ENCODE measurements at regions of chr13 and their contacts with region 1.

Region 1: DNA sequence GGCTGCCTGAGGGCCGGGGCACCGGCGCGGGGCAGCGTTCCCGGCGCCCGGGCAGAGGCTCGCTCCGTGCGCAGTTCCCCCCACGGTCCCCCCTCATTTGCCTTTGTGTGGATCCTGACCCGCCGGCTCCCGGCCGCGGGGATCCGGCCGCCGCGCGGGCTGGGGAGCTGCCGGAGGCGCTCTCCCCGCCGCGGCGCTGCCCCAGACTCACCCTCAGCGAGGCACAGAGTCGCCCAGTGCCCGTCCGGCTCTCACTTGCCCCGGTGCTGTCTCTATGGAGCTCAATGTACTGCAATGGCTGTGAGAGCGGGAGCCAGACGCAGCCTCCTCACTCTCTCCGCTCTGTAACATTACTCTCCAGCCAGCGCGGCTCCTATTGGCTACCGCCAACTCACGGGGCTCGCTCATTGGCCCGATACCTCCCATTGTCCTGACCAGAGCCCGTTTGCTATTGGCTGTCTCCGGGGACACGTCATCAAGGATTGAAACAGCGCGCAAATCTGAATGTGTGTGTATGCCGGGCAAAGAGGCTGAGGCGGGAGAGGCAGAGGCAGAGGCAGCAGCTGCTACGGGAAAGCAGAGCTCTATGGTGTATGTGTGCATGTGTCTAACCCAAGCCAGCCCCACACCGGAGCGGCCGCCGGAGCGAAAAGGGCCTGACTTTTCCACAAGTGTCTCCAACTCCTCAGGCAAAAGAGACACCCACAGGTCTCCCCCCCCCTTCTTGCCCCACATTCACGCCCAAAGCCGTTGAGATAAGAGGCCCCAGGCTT is at the start of gene HMGB1:
- DNase-seq: peak; percentile 93 to 98 (median 96)
- ATAC-seq: peak; percentile 85
- H3K4me3 ChIP-seq: peak within 1 kb of the TSS; percentile 54 to 97
- H3K4me3 Mint-ChIP-seq: peak within 1 kb of the TSS; percentile 95
- H3K27ac ChIP-seq: peak within 1 kb of the TSS; percentile 60 to 97
- H3K27ac Mint-ChIP-seq: peak within 1 kb of the TSS; percentile 99
- H3K4me1 ChIP-seq: peaks cover 26% of the 10 kb centered on the region
- H3K4me1 Mint-ChIP-seq: peaks cover 27% of the 10 kb centered on the region
- H3K27me3 ChIP-seq: no peaks in the 10 kb centered on the region
- H3K27me3 Mint-ChIP-seq: no peaks in the 10 kb centered on the region
- CTCF ChIP-seq: no peak
- total RNA-seq, gene HMGB1: 445 to 453 TPM

Region 2: DNA sequence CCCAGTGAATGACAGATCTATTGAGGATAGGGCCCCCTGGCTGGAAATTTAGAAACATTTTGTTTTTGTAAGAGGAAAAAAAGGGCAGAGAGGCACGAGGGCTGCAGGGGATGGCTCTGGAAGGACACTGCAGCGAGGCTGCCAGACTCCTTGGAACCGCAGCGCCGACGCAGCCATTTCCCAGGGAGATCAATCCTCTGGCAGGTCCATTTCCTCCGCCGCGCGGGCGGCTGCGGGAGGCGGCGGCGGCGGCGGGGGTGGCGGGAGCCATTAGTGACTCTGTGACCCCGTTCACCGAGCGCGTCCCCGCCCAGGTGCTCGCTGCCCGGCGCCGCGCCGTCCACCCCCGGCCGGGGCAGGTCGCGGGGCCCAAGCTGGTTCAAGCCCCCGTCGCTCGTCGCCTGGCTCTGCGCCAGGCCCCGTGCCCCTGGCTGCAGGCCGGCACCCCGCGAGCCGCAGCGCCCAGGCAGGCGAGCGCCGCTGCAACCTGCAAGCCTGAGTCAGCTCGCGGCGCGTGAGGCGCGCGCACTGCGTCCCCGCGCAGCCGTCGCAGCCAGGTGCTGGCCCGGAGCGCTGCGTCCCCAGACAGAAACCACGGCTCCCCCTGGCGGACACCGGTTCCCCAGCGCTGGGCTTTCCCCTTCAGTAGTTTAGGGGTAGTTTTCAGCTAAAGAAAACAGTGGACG is 351.1 kb before region 1 on chr13:
- CTCF ChIA-PET with region 1: interaction called, 3 read pairs
- POLR2A ChIA-PET with region 1: interaction called, 6 read pairs
- intact Hi-C with region 1: loop called in 1 of 2 experiments (anchors 5 kb)
- DNase-seq: peak; percentile 90 to 97 (median 94)
- ATAC-seq: peak; percentile 92
- H3K4me3 ChIP-seq: peak overlapping the region; percentile 45 to 61
- H3K4me3 Mint-ChIP-seq: peak overlapping the region; percentile 85
- H3K27ac ChIP-seq: no peak overlapping the region
- H3K27ac Mint-ChIP-seq: peak overlapping the region; percentile 92
- H3K4me1 ChIP-seq: peaks cover 15% of the 10 kb centered on the region
- H3K4me1 Mint-ChIP-seq: peaks cover 30% of the 10 kb centered on the region
- H3K27me3 ChIP-seq: no peaks in the 10 kb centered on the region
- H3K27me3 Mint-ChIP-seq: no peaks in the 10 kb centered on the region
- CTCF ChIP-seq: peak; percentile 91

Region 3: GRCh38 chr13:30292325-30292724 is 173.4 kb before region 1 on chr13:
- CTCF ChIA-PET with region 1: no interaction called
- POLR2A ChIA-PET with region 1: no interaction called
- intact Hi-C with region 1: no loop called
- DNase-seq: no peak
- ATAC-seq: no peak
- H3K4me3 ChIP-seq: no peak overlapping the region
- H3K4me3 Mint-ChIP-seq: no peak overlapping the region
- H3K27ac ChIP-seq: no peak overlapping the region
- H3K27ac Mint-ChIP-seq: no peak overlapping the region
- H3K4me1 ChIP-seq: no peaks in the 10 kb centered on the region
- H3K4me1 Mint-ChIP-seq: peaks cover 5% of the 10 kb centered on the region
- H3K27me3 ChIP-seq: no peaks in the 10 kb centered on the region
- H3K27me3 Mint-ChIP-seq: no peaks in the 10 kb centered on the region
- CTCF ChIP-seq: no peak

Region 4: DNA sequence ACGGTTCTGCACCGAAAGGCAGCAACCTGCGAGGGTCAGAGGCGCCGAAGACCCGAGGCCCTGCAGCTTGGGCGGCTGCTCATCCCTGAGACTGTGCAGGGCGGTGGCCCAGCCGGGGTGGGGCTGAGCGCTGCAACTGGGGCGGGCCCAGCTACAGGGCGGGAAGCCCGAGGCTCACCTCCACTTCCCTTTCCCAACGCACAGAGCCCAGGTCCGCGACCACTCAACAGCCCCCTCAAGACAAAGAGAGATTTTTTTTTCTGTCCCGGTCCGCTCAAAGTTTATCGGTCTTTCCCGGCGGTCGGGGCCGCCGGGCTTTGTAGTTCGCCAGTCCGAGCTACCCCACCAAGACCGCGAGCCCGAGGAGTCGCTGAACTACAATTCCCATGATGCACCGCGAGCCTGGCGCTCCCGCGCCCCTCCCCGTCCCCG is 159.0 kb before region 1 on chr13:
- CTCF ChIA-PET with region 1: interaction called, 7 read pairs
- POLR2A ChIA-PET with region 1: interaction called, 4 read pairs
- intact Hi-C with region 1: loop called (anchors 1 to 2 kb)
- DNase-seq: peak; percentile 80 to 94 (median 92)
- ATAC-seq: peak; percentile 86
- H3K4me3 ChIP-seq: peak overlapping the region; percentile 79 to 97
- H3K4me3 Mint-ChIP-seq: peak overlapping the region; percentile 89
- H3K27ac ChIP-seq: peak overlapping the region; percentile 56 to 60
- H3K27ac Mint-ChIP-seq: peak overlapping the region; percentile 79
- H3K4me1 ChIP-seq: peaks cover 5% of the 10 kb centered on the region
- H3K4me1 Mint-ChIP-seq: peaks cover 8% of the 10 kb centered on the region
- H3K27me3 ChIP-seq: no peaks in the 10 kb centered on the region
- H3K27me3 Mint-ChIP-seq: no peaks in the 10 kb centered on the region
- CTCF ChIP-seq: no peak

Region 5: DNA sequence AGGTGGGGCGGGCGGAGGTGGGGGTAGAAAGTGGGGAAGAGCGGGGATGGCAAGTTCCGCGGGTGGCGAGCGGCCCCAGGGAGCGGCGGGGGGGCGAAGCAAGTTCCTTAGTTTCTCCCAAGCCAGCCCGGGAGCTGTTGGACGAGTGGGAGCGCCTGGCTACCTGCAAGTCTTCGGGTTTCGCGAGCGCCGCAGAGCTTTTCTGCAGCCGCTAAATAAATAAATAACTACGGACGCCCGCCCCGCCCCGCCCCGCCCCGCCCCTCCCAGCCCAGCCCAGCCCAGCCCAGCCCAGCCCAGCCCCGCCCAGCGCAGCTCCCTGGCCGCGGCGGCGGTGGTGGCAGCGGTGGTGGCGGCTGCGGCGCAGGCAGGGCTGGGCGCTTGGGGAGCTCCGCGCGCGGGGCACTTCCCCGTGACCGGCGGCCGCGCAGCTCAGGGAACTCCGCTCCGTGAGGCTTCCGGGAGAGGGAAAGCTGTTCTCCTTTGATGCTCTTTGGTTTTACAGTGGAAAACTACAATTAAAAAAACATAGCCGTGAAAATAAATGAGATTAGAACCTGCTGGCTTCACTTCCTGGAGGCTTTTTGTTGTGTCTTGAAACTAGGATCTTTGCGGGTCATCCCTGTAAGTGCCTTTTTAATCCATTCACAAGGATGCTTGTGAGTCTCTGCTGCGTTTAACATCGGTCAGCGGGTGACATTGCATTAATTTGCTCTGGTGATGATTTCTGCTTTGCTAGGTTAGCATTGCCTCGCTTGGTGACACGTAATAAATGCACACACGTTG is 43.5 kb before region 1 on chr13 and contains the start of gene UBE2L5:
- CTCF ChIA-PET with region 1: interaction called, 3 read pairs
- POLR2A ChIA-PET with region 1: interaction called, 4 read pairs
- intact Hi-C with region 1: loop called (anchors 2 kb)
- DNase-seq: peak; percentile 31 to 82 (median 59)
- ATAC-seq: peak; percentile 88
- H3K4me3 ChIP-seq: peak within 1 kb of the TSS; percentile 41 to 58
- H3K4me3 Mint-ChIP-seq: peak within 1 kb of the TSS; percentile 88
- H3K27ac ChIP-seq: peak within 1 kb of the TSS; percentile 14 to 24
- H3K27ac Mint-ChIP-seq: peak within 1 kb of the TSS; percentile 82
- H3K4me1 ChIP-seq: peaks cover 4% of the 10 kb centered on the region
- H3K4me1 Mint-ChIP-seq: peaks cover 22% of the 10 kb centered on the region
- H3K27me3 ChIP-seq: no peaks in the 10 kb centered on the region
- H3K27me3 Mint-ChIP-seq: no peaks in the 10 kb centered on the region
- CTCF ChIP-seq: no peak
- total RNA-seq, gene UBE2L5: not detected

Region 6: GRCh38 chr13:30673669-30674521 is 208.1 kb after region 1 on chr13:
- CTCF ChIA-PET with region 1: interaction called, 4 read pairs
- POLR2A ChIA-PET with region 1: no interaction called
- intact Hi-C with region 1: loop called in 1 of 2 experiments (anchors 2 kb)
- DNase-seq: peak; percentile 82 to 95 (median 87)
- ATAC-seq: peak; percentile 91
- H3K4me3 ChIP-seq: peak overlapping the region; percentile 63
- H3K4me3 Mint-ChIP-seq: peak overlapping the region; percentile 88
- H3K27ac ChIP-seq: peak overlapping the region; percentile 44 to 68
- H3K27ac Mint-ChIP-seq: peak overlapping the region; percentile 92
- H3K4me1 ChIP-seq: peaks cover 7% of the 10 kb centered on the region
- H3K4me1 Mint-ChIP-seq: peaks cover 25% of the 10 kb centered on the region
- H3K27me3 ChIP-seq: no peaks in the 10 kb centered on the region
- H3K27me3 Mint-ChIP-seq: no peaks in the 10 kb centered on the region
- CTCF ChIP-seq: no peak

Region 7: DNA sequence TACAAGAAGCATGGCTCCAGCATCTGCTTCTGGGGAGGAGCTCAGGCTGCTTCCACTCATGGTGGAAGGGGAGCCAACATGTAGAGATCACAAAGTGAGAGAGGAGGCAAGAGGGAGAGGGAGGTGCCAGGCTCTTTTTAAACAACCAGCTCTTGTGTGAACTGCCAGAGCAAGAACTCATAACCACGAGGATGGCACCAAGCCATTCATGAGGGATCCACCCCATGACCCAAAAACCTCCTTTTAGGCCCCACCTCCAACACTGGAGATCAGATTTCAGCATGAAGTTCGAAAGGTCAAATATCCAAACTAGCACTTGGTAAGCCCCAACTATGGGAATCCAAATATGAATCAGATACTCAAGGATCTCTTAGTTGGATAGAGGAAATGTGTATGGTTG is 1404.7 kb after region 1 on chr13:
- CTCF ChIA-PET with region 1: no interaction called
- POLR2A ChIA-PET with region 1: no interaction called
- intact Hi-C with region 1: no loop called
- DNase-seq: no peak
- ATAC-seq: no peak
- H3K4me3 ChIP-seq: no peak overlapping the region
- H3K4me3 Mint-ChIP-seq: no peak overlapping the region
- H3K27ac ChIP-seq: no peak overlapping the region
- H3K27ac Mint-ChIP-seq: no peak overlapping the region
- H3K4me1 ChIP-seq: no peaks in the 10 kb centered on the region
- H3K4me1 Mint-ChIP-seq: no peaks in the 10 kb centered on the region
- H3K27me3 ChIP-seq: no peaks in the 10 kb centered on the region
- H3K27me3 Mint-ChIP-seq: no peaks in the 10 kb centered on the region
- CTCF ChIP-seq: no peak

Measured in CD8-positive, alpha-beta T cell (primary cell).